ENCODE measurements at regions of chr15 and their contacts with region 1.

Region 1: GRCh38 chr15:37995461-37996347 is 61.3 kb downstream of the TMCO5A start:
- DNase-seq: peak; percentile 41
- H3K4me3 ChIP-seq: peak overlapping the region in 1 of 2 experiments; percentile 12; a peak in 1 of 4 replicates
- H3K27ac ChIP-seq: no peak overlapping the region
- H3K4me1 ChIP-seq: peaks cover 0 to 2% of the 10 kb centered on the region in 2 experiments; a peak in 1 of 4 replicates
- H3K27me3 ChIP-seq: no peaks in the 10 kb centered on the region
- CTCF ChIP-seq: peak; percentile 89
- EP300 ChIP-seq: no peak
- RAD21 ChIP-seq: peak; percentile 96

Region 2: GRCh38 chr15:37981775-37982174 is 13.9 kb before region 1 on chr15:
- CTCF ChIA-PET with region 1: interaction called, 39 read pairs
- POLR2A ChIA-PET with region 1: no interaction called
- DNase-seq: peak; percentile 30
- H3K4me3 ChIP-seq: no peak overlapping the region
- H3K27ac ChIP-seq: no peak overlapping the region
- H3K4me1 ChIP-seq: peaks cover 0 to 13% of the 10 kb centered on the region in 2 experiments; a peak in 2 of 4 replicates
- H3K27me3 ChIP-seq: no peaks in the 10 kb centered on the region
- CTCF ChIP-seq: peak; percentile 49
- EP300 ChIP-seq: no peak
- RAD21 ChIP-seq: peak; percentile 58

Region 3: DNA sequence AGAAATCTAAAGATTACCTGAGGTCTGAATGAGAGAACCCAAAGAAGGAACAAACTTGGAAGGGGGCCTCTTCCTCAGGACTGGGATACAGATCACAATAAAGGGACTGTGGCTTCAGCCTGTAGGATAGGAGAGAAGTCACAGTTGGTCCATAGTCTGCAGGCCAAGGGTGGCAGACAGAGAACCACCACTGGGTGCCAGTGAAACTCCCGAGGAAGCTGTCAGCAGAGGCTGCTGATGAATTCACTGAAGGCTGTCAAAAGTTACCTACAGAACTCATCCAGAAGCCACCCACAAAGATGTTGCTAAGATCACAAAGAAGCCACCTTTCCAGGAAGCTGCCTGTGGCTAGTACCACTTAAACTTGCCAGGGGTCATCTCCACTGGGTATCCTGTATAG is 17.2 kb after region 1 on chr15:
- CTCF ChIA-PET with region 1: interaction called, 21 read pairs
- POLR2A ChIA-PET with region 1: no interaction called
- DNase-seq: no peak
- H3K4me3 ChIP-seq: no peak overlapping the region
- H3K27ac ChIP-seq: no peak overlapping the region
- H3K4me1 ChIP-seq: no peaks in the 10 kb centered on the region
- H3K27me3 ChIP-seq: no peaks in the 10 kb centered on the region
- CTCF ChIP-seq: no peak
- EP300 ChIP-seq: no peak
- RAD21 ChIP-seq: no peak

Region 4: GRCh38 chr15:38041576-38041975 is 45.9 kb after region 1 on chr15:
- CTCF ChIA-PET with region 1: no interaction called
- POLR2A ChIA-PET with region 1: no interaction called
- DNase-seq: no peak
- H3K4me3 ChIP-seq: no peak overlapping the region
- H3K27ac ChIP-seq: peak overlapping the region in 1 of 2 experiments; percentile 38; a peak in 2 of 4 replicates
- H3K4me1 ChIP-seq: peaks cover 2 to 26% of the 10 kb centered on the region in 2 experiments; a peak in 3 of 4 replicates
- H3K27me3 ChIP-seq: no peaks in the 10 kb centered on the region
- CTCF ChIP-seq: no peak
- EP300 ChIP-seq: no peak
- RAD21 ChIP-seq: no peak

Region 5: DNA sequence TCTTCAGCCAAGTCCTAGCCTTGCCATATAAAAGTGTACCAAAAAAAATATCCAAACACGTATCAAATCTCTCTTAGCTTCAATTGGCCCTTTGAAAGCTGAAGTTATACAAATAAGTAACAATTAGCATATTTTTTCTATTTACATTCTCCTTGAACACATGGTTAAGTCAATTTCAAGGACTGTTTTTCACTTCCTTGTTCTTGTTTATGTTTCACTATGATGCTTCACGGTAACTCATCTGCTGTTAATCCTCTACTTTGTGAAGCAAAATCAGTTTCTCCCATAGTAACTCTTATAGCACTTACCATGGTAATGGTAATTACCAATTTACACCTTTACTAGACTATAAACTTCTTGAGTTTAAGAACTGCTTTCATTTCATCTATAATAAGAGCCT is 246.4 kb after region 1 on chr15:
- CTCF ChIA-PET with region 1: no interaction called
- POLR2A ChIA-PET with region 1: no interaction called
- DNase-seq: no peak
- H3K4me3 ChIP-seq: no peak overlapping the region
- H3K27ac ChIP-seq: no peak overlapping the region
- H3K4me1 ChIP-seq: no peaks in the 10 kb centered on the region; a peak in 1 of 4 replicates
- H3K27me3 ChIP-seq: no peaks in the 10 kb centered on the region
- CTCF ChIP-seq: no peak
- EP300 ChIP-seq: no peak
- RAD21 ChIP-seq: no peak

Region 6: DNA sequence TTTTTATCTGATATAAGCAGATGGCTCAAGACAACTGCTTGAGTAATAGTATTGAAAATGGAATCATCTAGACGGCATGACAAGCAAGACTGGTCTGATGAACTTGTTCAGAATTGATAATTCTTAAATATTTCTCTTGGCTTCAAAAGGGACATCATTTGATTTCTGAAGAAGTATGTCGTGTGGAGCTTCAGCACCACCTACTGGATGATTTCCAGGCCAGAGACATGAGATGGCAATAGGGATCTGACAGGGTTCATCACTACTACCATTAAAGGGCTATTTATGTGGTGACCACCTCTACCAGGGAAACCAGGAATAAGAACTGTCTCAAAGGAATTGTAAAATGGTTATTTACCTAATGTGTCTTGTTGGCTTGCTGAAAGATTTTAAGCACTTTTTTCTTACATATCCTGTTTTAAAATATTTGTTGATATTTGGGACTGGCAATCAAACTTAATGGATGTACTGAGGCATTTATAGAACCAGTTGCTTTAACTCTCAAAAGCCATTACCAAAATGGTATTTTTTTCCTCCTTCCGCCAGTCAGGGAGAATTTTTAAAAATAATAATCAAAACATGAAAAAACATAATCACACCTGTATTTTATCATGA is 358.7 kb after region 1 on chr15:
- CTCF ChIA-PET with region 1: interaction called, 86 read pairs
- POLR2A ChIA-PET with region 1: no interaction called
- DNase-seq: peak; percentile 53
- H3K4me3 ChIP-seq: no peak overlapping the region; a peak in 1 of 4 replicates
- H3K27ac ChIP-seq: no peak overlapping the region; a peak in 1 of 4 replicates
- H3K4me1 ChIP-seq: no peaks in the 10 kb centered on the region; a peak in 1 of 4 replicates
- H3K27me3 ChIP-seq: no peaks in the 10 kb centered on the region
- CTCF ChIP-seq: peak; percentile 85
- EP300 ChIP-seq: no peak
- RAD21 ChIP-seq: peak; percentile 91

Region 7: DNA sequence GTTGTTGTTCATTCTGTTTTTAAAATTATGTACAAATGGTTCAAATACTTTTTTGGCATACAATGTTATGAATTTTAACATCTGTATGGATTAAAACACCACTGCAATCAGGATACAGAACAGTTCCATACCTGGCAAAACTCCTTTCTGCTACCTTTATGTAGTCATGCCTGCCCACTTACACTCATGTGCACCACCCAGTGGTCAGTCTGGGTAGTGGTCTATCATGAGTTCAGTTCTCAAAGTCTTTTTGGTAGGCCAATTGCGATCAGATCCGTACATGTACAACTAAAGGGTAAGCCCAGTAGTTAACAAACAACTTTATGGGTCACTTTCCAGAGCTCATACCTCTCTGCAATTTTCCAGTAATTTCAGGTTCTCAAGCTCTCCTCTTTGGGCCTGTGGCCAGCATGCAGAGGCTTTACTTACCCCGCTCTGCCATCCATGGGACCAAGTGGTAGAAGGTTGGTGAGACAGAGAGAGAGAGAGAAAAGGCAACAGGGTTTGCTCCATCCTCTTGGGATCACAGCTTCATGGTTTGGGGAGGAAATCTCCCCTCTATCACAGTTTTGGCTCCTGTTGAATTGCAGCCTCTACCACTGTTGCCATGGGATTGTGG is 394.3 kb after region 1 on chr15:
- CTCF ChIA-PET with region 1: interaction called, 71 read pairs
- POLR2A ChIA-PET with region 1: no interaction called
- DNase-seq: peak; percentile 51
- H3K4me3 ChIP-seq: no peak overlapping the region; a peak in 1 of 4 replicates
- H3K27ac ChIP-seq: no peak overlapping the region
- H3K4me1 ChIP-seq: no peaks in the 10 kb centered on the region
- H3K27me3 ChIP-seq: no peaks in the 10 kb centered on the region
- CTCF ChIP-seq: peak; percentile 80
- EP300 ChIP-seq: no peak
- RAD21 ChIP-seq: peak; percentile 75

Region 8: GRCh38 chr15:38421069-38421690 is 425.5 kb after region 1 on chr15:
- CTCF ChIA-PET with region 1: interaction called, 11 read pairs
- POLR2A ChIA-PET with region 1: no interaction called
- DNase-seq: no peak
- H3K4me3 ChIP-seq: no peak overlapping the region
- H3K27ac ChIP-seq: no peak overlapping the region
- H3K4me1 ChIP-seq: no peaks in the 10 kb centered on the region
- H3K27me3 ChIP-seq: peaks cover 6% of the 10 kb centered on the region; the same call in 1 of the 2 replicates
- CTCF ChIP-seq: no peak
- EP300 ChIP-seq: no peak
- RAD21 ChIP-seq: no peak